HAP-1 (cell line): ENCODE measurements at regions of chr10 and their contacts with region 1.

Region 1: GRCh38 chr10:11986593-11987216 is 55.9 kb downstream of the UPF2 start:
- DNase-seq: peak; percentile 71 to 84
- H3K4me3 ChIP-seq: no peak overlapping the region
- H3K4me1 ChIP-seq: no peaks in the 10 kb centered on the region
- H3K27me3 ChIP-seq: no peaks in the 10 kb centered on the region

Region 2: DNA sequence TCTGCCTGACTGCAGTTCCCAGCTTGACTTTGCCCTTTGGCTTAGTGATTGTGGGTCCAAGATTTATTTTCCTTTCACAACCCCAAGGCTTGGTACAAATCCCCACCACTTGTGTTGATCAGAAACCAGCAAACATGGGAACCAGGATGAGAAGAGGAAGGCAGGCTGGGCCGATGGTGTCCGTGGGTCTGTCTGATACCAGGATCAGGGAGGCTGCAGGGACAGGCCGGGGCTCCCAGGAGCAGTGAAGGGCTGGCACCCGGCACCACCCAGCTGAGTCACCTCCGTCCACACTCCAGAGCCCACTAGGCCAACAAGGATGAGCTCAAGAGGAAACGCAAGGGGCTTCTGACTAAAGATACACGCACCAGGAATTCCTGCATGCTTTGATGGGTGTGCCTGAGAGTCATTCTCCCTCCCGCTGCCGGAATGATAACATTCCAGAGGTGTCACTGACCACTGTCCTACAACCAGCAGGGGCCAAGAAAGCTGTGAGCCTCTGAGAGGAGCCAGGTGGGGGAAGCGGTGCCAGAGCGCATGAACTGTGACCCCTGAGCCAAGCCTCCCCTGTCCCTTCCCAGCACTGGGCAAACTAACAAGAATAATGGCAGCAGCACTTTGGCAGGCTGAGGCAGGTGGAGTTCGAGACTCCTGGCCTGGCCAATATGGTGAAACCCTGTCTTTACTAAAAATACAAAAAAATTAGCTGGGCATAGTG is 192.8 kb before region 1 on chr10:
- in situ Hi-C with region 1: loop called (anchors 5 kb)
- DNase-seq: no peak
- H3K4me3 ChIP-seq: no peak overlapping the region
- H3K4me1 ChIP-seq: peaks cover 3% of the 10 kb centered on the region
- H3K27me3 ChIP-seq: peaks cover 17% of the 10 kb centered on the region